T-cell (primary cell): ENCODE measurements at regions of chr22 and their contacts with region 1.

Region 1: DNA sequence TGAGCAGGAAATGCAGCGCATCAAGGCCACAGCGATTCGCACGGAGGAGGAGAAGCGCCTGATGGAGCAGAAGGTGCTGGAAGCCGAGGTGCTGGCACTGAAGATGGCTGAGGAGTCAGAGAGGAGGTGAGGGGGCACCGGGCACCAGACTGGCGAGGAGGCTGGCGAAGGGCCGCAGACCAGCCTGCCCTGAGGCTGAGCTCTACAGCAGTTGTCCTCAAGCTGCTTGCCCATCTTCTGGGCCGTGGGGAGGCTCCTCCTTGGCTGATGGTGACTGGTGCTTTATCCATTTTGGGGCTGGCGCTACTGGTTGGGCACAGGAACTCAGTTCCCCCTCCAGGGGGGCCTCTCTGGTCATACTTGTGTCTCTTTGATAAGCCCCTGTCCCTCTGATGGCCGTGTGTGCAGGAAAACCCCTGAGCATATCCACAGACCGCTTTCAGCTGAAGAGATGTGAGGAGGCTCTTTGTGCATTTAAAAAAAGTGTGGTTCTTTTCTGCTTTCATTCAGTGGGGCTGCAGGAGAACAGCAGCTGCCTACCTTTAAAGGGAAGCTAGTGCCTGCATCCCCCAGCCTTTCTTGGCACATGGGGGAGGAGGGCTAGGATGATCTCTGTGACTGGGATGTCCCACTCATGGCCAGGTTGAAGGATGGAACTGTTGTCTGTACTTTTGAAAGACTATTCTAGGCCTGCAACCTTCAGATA is 46.3 kb upstream of the CABP7 start:
- DNase-seq: no peak
- ATAC-seq: no peak
- H3K4me3 ChIP-seq: no peak overlapping the region
- H3K4me3 Mint-ChIP-seq: no peak overlapping the region
- H3K27ac ChIP-seq: no peak overlapping the region
- H3K27ac Mint-ChIP-seq: no peak overlapping the region
- H3K4me1 ChIP-seq: no peaks in the 10 kb centered on the region
- H3K4me1 Mint-ChIP-seq: no peaks in the 10 kb centered on the region
- H3K27me3 ChIP-seq: no peaks in the 10 kb centered on the region
- H3K27me3 Mint-ChIP-seq: no peaks in the 10 kb centered on the region

Region 2: DNA sequence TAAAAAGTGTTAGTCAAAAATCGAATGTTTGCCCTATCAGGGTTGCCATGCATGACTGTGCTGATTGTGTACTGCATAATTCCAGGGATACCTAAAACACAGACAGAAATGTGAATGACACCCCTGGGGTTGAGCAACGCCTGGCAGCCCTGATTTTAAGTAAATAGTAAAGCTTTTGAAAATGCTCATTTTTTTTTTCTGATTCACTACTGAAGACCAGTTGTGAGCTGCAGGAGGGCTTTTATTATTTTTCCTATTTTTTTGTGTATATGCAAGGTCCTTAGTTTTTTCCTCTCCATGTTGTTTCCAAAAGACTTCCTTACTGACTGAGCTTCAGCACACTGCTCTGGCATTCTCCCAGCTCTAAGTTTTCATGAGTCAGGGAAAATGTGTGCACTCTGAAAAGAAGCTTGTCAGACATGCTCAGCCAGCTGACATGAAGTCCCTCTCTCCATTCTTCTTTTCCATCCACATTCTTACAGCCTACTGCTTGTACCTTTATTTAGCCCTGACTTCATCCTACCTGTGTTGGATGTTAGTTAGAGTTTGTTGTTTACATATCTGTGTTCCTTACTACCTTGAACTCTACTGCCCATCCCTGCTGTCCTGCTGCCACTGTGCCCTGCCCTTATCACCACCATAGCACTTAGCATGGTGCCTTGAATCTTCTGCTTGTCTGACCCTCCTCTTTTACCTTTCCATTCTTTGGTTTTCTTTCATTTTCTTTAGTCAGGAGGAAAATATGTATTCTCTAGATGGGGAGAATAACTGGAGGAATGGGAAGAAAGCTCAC is 486.2 kb after region 1 on chr22:
- CTCF ChIA-PET with region 1: no interaction called
- POLR2A ChIA-PET with region 1: interaction called in 1 of 2 experiments, 10 read pairs
- DNase-seq: no peak
- ATAC-seq: no peak
- H3K4me3 ChIP-seq: no peak overlapping the region
- H3K4me3 Mint-ChIP-seq: no peak overlapping the region
- H3K27ac ChIP-seq: no peak overlapping the region
- H3K27ac Mint-ChIP-seq: peak overlapping the region; percentile 59 to 74
- H3K4me1 ChIP-seq: peaks cover 0 to 2% of the 10 kb centered on the region in 2 experiments
- H3K4me1 Mint-ChIP-seq: peaks cover 11 to 24% (median 13%) of the 10 kb centered on the region in 3 donors
- H3K27me3 ChIP-seq: no peaks in the 10 kb centered on the region
- H3K27me3 Mint-ChIP-seq: peaks cover 0 to 3% of the 10 kb centered on the region in 2 donors